CD4-positive, alpha-beta T cell (primary cell): ENCODE measurements at regions of chr1 and their contacts with region 1.

Region 1: GRCh38 chr1:110787328-110788071 is 85.4 kb upstream of the CD53 start:
- DNase-seq: peak in 11 of 14 experiments; percentile 4 to 87 (median 41)
- ATAC-seq: peak; percentile 71
- H3K4me3 ChIP-seq: peak overlapping the region; percentile 35
- H3K4me3 Mint-ChIP-seq: peak overlapping the region; percentile 75
- H3K27ac ChIP-seq: peak overlapping the region; percentile 23 to 58
- H3K27ac Mint-ChIP-seq: peak overlapping the region; percentile 82
- H3K4me1 ChIP-seq: peaks cover 55% of the 10 kb centered on the region
- H3K4me1 Mint-ChIP-seq: peaks cover 77% of the 10 kb centered on the region
- H3K27me3 ChIP-seq: no peaks in the 10 kb centered on the region
- H3K27me3 Mint-ChIP-seq: no peaks in the 10 kb centered on the region
- CTCF ChIP-seq: no peak

Region 2: DNA sequence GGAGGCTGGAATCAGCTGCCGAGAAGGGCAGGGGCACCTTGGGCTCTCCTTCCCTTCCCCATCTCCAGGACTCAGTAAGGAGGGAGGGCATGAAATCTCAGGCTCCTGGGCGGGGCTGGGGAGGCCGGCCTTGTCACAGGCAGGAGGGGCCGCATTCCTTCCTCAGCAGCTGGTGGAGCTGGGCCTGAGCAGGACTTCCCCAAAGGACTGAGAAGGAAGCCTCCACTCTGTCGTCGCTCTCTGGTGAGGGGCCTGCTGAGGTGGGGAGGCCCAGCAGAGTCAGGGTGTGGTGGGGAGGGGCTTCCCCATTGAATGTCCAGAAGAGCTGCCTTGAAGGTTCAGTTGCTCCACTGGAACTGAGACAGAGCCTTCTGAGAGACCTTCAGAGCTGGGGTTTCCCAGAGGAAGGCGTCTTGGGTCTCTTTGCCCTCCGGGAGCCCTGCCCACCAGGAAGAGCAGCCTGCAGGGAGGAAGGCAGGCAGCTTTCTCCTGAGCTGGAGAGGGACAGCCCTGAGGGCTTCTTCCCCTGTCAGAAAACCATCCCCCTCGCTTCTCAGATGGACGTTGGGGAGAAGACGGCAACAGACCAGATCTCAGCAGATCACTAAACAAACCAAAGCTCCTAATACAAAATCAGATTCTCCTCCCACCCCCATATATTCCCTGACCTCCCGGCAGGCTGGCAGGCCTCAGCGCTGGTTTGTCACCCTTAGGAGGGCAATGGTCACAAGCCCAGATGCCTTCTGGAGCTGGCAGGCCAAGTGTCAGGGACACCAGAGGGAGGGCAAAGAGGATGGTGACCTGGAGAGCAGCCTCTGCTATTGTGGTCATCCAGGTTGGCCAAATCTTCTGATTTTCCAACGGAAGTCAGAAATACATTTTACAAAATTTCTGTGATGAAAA is 279.2 kb before region 1 on chr1:
- CTCF ChIA-PET with region 1: no interaction called
- POLR2A ChIA-PET with region 1: no interaction called
- intact Hi-C with region 1: no loop called
- DNase-seq: peak in 2 of 14 experiments; percentile 29 to 38
- ATAC-seq: no peak
- H3K4me3 ChIP-seq: no peak overlapping the region
- H3K4me3 Mint-ChIP-seq: no peak overlapping the region
- H3K27ac ChIP-seq: no peak overlapping the region
- H3K27ac Mint-ChIP-seq: no peak overlapping the region
- H3K4me1 ChIP-seq: no peaks in the 10 kb centered on the region
- H3K4me1 Mint-ChIP-seq: no peaks in the 10 kb centered on the region
- H3K27me3 ChIP-seq: no peaks in the 10 kb centered on the region
- H3K27me3 Mint-ChIP-seq: peaks cover 2% of the 10 kb centered on the region
- CTCF ChIP-seq: no peak

Region 3: DNA sequence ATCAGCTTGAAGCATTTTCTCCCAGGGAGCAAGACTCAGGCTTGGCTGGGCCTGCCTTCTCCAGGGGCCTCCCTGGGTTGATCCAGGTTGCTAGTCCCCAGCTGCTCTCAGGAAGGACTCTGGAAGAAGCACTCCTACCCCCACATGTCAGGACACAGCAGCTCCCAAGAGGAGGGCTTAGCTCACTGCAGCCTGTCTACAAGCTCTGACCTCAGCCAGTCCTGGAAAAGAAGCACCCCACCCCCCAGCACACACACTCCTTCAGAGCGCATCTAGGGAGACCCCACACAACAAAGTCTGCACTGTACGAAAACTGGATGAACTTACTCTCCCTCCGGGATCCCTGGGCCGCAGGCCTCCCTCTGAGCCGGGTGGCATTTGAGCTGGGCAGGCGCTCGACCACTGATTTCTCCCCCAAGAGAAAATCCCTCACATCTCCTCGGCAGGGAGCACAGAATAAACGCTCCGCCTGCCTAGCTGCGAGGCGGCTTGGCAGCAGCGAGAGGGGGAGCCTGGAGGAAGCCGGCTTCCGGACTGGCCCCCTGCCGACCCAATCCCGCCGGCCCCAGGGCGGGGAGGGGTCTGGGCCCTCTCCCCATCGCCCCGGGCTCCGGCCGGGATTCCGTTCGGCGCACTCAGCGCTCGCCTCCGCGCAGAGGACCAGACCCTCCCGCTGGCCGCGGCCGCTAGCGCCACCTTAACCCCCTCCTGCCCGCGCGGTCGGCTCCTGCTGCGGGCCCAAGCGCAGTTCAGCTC is 181.4 kb before region 1 on chr1 and contains the start of gene KCNA2:
- CTCF ChIA-PET with region 1: interaction called, 3 read pairs
- POLR2A ChIA-PET with region 1: interaction called, 10 read pairs
- intact Hi-C with region 1: no loop called
- DNase-seq: peak in 1 of 14 experiments; percentile 7
- ATAC-seq: peak; percentile 22
- H3K4me3 ChIP-seq: peak within 1 kb of the TSS; percentile 64
- H3K4me3 Mint-ChIP-seq: peak within 1 kb of the TSS; percentile 77
- H3K27ac ChIP-seq: no peak within 1 kb of the TSS
- H3K27ac Mint-ChIP-seq: no peak within 1 kb of the TSS
- H3K4me1 ChIP-seq: peaks cover 26% of the 10 kb centered on the region
- H3K4me1 Mint-ChIP-seq: peaks cover 9% of the 10 kb centered on the region
- H3K27me3 ChIP-seq: peaks cover 45 to 53% of the 10 kb centered on the region in 2 experiments
- H3K27me3 Mint-ChIP-seq: peaks cover 72% of the 10 kb centered on the region
- CTCF ChIP-seq: no peak
- total RNA-seq, gene KCNA2: 0.78 to 0.88 TPM

Region 4: GRCh38 chr1:110630839-110631663 is 156.4 kb before region 1 on chr1:
- CTCF ChIA-PET with region 1: interaction called, 7 read pairs
- POLR2A ChIA-PET with region 1: interaction called, 14 read pairs
- intact Hi-C with region 1: loop called in 1 of 2 experiments (anchors 1 kb)
- DNase-seq: peak; percentile 77 to 93 (median 83)
- ATAC-seq: peak; percentile 72
- H3K4me3 ChIP-seq: peak overlapping the region; percentile 43
- H3K4me3 Mint-ChIP-seq: no peak overlapping the region
- H3K27ac ChIP-seq: peak overlapping the region; percentile 66 to 75
- H3K27ac Mint-ChIP-seq: no peak overlapping the region
- H3K4me1 ChIP-seq: peaks cover 87% of the 10 kb centered on the region
- H3K4me1 Mint-ChIP-seq: peaks cover 47% of the 10 kb centered on the region
- H3K27me3 ChIP-seq: no peaks in the 10 kb centered on the region
- H3K27me3 Mint-ChIP-seq: no peaks in the 10 kb centered on the region
- CTCF ChIP-seq: peak; percentile 87

Region 5: GRCh38 chr1:110645821-110646735 is 141.4 kb before region 1 on chr1:
- CTCF ChIA-PET with region 1: interaction called, 3 read pairs
- POLR2A ChIA-PET with region 1: interaction called, 10 read pairs
- intact Hi-C with region 1: no loop called
- DNase-seq: peak in 3 of 14 experiments; percentile 45 to 71 (median 62)
- ATAC-seq: no peak
- H3K4me3 ChIP-seq: no peak overlapping the region
- H3K4me3 Mint-ChIP-seq: peak overlapping the region; percentile 43
- H3K27ac ChIP-seq: no peak overlapping the region
- H3K27ac Mint-ChIP-seq: no peak overlapping the region
- H3K4me1 ChIP-seq: peaks cover 77% of the 10 kb centered on the region
- H3K4me1 Mint-ChIP-seq: peaks cover 46% of the 10 kb centered on the region
- H3K27me3 ChIP-seq: no peaks in the 10 kb centered on the region
- H3K27me3 Mint-ChIP-seq: no peaks in the 10 kb centered on the region
- CTCF ChIP-seq: no peak

Region 6: DNA sequence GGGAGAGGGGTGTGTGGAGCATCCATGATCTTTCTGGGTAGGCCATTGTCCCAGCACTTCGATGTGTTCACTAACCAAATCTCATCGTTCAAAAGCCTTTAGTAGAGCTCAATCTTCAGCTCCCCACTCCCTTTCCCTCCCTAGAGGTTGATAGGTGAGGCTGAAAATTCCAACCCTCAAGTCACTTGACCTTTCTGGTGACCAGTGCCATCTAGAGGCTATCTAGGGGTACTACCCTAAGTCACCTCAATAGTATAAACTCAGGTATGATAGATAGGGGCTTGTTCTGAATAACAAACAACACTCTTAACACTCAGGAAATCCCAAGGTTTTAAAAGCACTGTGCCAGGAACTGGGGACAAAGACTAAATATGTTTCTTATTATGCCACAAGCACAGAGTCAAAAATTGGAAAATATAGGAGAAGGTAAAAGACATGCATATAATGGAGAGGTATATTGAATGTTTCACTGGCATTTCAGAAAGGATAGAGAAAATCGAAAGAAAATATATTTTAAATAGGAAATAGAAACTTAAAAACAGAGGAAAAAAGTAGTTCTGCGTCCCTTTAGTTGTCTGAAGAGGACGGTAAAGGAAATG is 42.6 kb after region 1 on chr1:
- CTCF ChIA-PET with region 1: interaction called, 4 read pairs
- POLR2A ChIA-PET with region 1: interaction called, 17 read pairs
- intact Hi-C with region 1: loop called in 1 of 2 experiments (anchors 1 kb)
- DNase-seq: peak in 6 of 14 experiments; percentile 11 to 76 (median 52)
- ATAC-seq: peak; percentile 96
- H3K4me3 ChIP-seq: no peak overlapping the region
- H3K4me3 Mint-ChIP-seq: no peak overlapping the region
- H3K27ac ChIP-seq: no peak overlapping the region
- H3K27ac Mint-ChIP-seq: no peak overlapping the region
- H3K4me1 ChIP-seq: peaks cover 5% of the 10 kb centered on the region
- H3K4me1 Mint-ChIP-seq: peaks cover 21% of the 10 kb centered on the region
- H3K27me3 ChIP-seq: no peaks in the 10 kb centered on the region
- H3K27me3 Mint-ChIP-seq: no peaks in the 10 kb centered on the region
- CTCF ChIP-seq: peak; percentile 95

Region 7: GRCh38 chr1:110879758-110880606 is 92.5 kb after region 1 on chr1:
- CTCF ChIA-PET with region 1: interaction called, 5 read pairs
- POLR2A ChIA-PET with region 1: interaction called, 106 read pairs
- intact Hi-C with region 1: no loop called
- DNase-seq: peak in 10 of 14 experiments; percentile 19 to 86 (median 53)
- ATAC-seq: peak; percentile 51
- H3K4me3 ChIP-seq: peak overlapping the region; percentile 33
- H3K4me3 Mint-ChIP-seq: peak overlapping the region; percentile 76
- H3K27ac ChIP-seq: peak overlapping the region; percentile 59 to 78
- H3K27ac Mint-ChIP-seq: peak overlapping the region; percentile 95
- H3K4me1 ChIP-seq: peaks cover 34% of the 10 kb centered on the region
- H3K4me1 Mint-ChIP-seq: peaks cover 89% of the 10 kb centered on the region
- H3K27me3 ChIP-seq: no peaks in the 10 kb centered on the region
- H3K27me3 Mint-ChIP-seq: no peaks in the 10 kb centered on the region
- CTCF ChIP-seq: no peak

Region 8: DNA sequence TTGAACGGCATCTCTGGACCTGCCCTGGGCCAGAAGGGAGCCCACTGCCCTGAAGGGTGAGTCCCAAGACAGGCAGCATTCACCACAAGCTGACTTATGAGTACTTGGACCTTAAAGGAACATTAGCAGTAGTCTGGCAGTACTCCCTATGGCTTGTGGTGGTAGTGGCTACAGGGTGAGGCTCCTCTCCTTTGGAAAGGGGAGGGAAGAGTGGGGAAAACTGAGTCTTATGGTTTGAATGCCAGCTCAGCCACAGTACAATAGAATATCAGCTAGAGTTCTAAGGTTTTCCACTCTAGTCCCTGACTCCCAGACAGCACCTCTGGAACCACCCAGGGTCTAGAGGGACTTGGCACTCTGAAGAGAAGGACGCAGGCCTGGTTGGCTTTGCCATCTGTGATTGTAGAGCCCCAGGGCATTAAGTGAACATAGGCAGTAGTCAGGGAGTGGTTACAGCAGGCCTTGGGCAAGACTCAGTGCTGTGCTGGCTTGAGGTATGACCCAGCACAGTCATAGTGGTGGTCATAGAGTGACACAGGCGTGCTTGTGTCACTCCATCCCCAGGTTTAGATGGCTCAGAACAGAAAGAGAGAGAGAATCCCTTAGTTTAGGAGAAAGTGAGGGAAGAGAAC is 116.5 kb after region 1 on chr1:
- CTCF ChIA-PET with region 1: no interaction called
- POLR2A ChIA-PET with region 1: interaction called, 14 read pairs
- intact Hi-C with region 1: no loop called
- DNase-seq: peak in 1 of 14 experiments; percentile 26
- ATAC-seq: peak; percentile 18
- H3K4me3 ChIP-seq: no peak overlapping the region
- H3K4me3 Mint-ChIP-seq: no peak overlapping the region
- H3K27ac ChIP-seq: no peak overlapping the region
- H3K27ac Mint-ChIP-seq: peak overlapping the region; percentile 19
- H3K4me1 ChIP-seq: peaks cover 6% of the 10 kb centered on the region
- H3K4me1 Mint-ChIP-seq: peaks cover 45% of the 10 kb centered on the region
- H3K27me3 ChIP-seq: no peaks in the 10 kb centered on the region
- H3K27me3 Mint-ChIP-seq: no peaks in the 10 kb centered on the region
- CTCF ChIP-seq: no peak